ENCODE measurements at regions of chr15 and their contacts with region 1.

Region 1: DNA sequence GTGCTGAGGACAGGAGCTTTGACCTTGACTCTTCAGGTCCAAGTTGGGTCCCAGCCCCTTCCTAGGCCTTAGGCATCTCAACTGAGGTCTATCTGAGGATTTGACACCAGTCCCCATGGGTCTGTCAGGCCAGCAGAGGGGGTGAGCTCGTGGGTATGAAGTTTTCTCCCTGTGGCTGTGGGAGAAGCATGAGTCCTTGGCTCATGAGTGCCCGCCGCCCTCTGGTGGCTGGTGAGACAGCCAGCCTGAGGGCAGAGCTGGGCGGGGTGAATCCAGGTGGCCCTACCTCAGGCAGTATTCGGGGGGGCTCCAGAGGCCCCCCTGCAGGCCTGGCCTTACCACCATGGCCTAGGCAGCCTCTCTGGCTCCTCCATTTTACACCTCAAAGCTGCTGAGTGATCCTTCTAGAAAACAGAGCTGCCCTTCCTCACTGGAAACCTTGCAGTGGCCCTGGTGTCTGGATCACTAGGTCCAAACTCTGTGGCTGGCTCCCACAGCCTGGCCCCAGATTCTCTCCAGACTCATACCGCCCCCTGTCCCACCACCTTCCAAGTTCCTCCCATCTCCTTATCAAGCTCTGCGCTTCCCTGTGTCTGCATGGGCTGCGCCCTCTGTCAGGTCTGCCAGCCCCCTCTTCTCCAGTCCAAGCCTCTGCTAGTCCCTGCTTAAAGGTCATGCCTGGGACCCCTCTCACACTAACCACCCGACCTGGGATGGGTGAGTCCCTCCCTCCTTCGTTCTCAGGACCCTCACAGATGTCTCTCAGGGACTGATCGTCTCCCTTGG is 16.1 kb downstream of the SH2D7 start:
- DNase-seq: peak; percentile 82
- H3K4me3 ChIP-seq: no peak overlapping the region
- H3K27ac ChIP-seq: no peak overlapping the region
- H3K4me1 ChIP-seq: peaks cover 16% of the 10 kb centered on the region
- H3K27me3 ChIP-seq: no peaks in the 10 kb centered on the region
- CTCF ChIP-seq: peak; percentile 94 to 96
- POLR2A ChIP-seq: no peak

Region 2: GRCh38 chr15:77966540-77967290 is 141.8 kb before region 1 on chr15:
- CTCF ChIA-PET with region 1: interaction called, 151 read pairs
- POLR2A ChIA-PET with region 1: no interaction called
- dilution Hi-C with region 1: no loop called
- intact Hi-C with region 1: loop called (anchors 1 kb)
- DNase-seq: peak; percentile 34
- H3K4me3 ChIP-seq: no peak overlapping the region
- H3K27ac ChIP-seq: no peak overlapping the region
- H3K4me1 ChIP-seq: no peaks in the 10 kb centered on the region
- H3K27me3 ChIP-seq: peaks cover 0 to 1% of the 10 kb centered on the region in 2 experiments
- CTCF ChIP-seq: peak; percentile 78
- POLR2A ChIP-seq: no peak

Region 3: GRCh38 chr15:78018946-78019644 is 89.4 kb before region 1 on chr15:
- CTCF ChIA-PET with region 1: interaction called, 18 read pairs
- POLR2A ChIA-PET with region 1: no interaction called
- dilution Hi-C with region 1: no loop called
- intact Hi-C with region 1: no loop called
- DNase-seq: no peak
- H3K4me3 ChIP-seq: no peak overlapping the region
- H3K27ac ChIP-seq: no peak overlapping the region
- H3K4me1 ChIP-seq: no peaks in the 10 kb centered on the region
- H3K27me3 ChIP-seq: no peaks in the 10 kb centered on the region
- CTCF ChIP-seq: no peak
- POLR2A ChIP-seq: no peak

Region 4: GRCh38 chr15:78049691-78050440 is 58.6 kb before region 1 on chr15:
- CTCF ChIA-PET with region 1: interaction called, 23 read pairs
- POLR2A ChIA-PET with region 1: no interaction called
- dilution Hi-C with region 1: no loop called
- intact Hi-C with region 1: no loop called
- DNase-seq: no peak
- H3K4me3 ChIP-seq: no peak overlapping the region
- H3K27ac ChIP-seq: no peak overlapping the region
- H3K4me1 ChIP-seq: peaks cover 45% of the 10 kb centered on the region
- H3K27me3 ChIP-seq: no peaks in the 10 kb centered on the region
- CTCF ChIP-seq: no peak
- POLR2A ChIP-seq: no peak

Region 5: GRCh38 chr15:78120523-78120922 is 12.0 kb after region 1 on chr15:
- CTCF ChIA-PET with region 1: interaction called, 12 read pairs
- POLR2A ChIA-PET with region 1: no interaction called
- dilution Hi-C with region 1: no loop called
- intact Hi-C with region 1: no loop called
- DNase-seq: no peak
- H3K4me3 ChIP-seq: no peak overlapping the region
- H3K27ac ChIP-seq: no peak overlapping the region
- H3K4me1 ChIP-seq: no peaks in the 10 kb centered on the region
- H3K27me3 ChIP-seq: no peaks in the 10 kb centered on the region
- CTCF ChIP-seq: no peak
- POLR2A ChIP-seq: no peak

Region 6: GRCh38 chr15:78195735-78196201 is 87.3 kb after region 1 on chr15:
- CTCF ChIA-PET with region 1: interaction called, 195 read pairs
- POLR2A ChIA-PET with region 1: no interaction called
- dilution Hi-C with region 1: no loop called
- intact Hi-C with region 1: loop called (anchors 1 kb)
- DNase-seq: peak; percentile 32
- H3K4me3 ChIP-seq: no peak overlapping the region
- H3K27ac ChIP-seq: no peak overlapping the region
- H3K4me1 ChIP-seq: no peaks in the 10 kb centered on the region
- H3K27me3 ChIP-seq: peaks cover 0 to 2% of the 10 kb centered on the region in 2 experiments
- CTCF ChIP-seq: peak; percentile 64 to 75
- POLR2A ChIP-seq: no peak